Activated CD8-positive, alpha-beta T cell treated with anti-CD3 and anti-CD28 coated beads, Interleukin-2, amount 10 ng/mL, durations not matched to agents 7 days and 5 days (primary cell): ENCODE measurements at regions of chr7 and their contacts with region 1.

Region 1: DNA sequence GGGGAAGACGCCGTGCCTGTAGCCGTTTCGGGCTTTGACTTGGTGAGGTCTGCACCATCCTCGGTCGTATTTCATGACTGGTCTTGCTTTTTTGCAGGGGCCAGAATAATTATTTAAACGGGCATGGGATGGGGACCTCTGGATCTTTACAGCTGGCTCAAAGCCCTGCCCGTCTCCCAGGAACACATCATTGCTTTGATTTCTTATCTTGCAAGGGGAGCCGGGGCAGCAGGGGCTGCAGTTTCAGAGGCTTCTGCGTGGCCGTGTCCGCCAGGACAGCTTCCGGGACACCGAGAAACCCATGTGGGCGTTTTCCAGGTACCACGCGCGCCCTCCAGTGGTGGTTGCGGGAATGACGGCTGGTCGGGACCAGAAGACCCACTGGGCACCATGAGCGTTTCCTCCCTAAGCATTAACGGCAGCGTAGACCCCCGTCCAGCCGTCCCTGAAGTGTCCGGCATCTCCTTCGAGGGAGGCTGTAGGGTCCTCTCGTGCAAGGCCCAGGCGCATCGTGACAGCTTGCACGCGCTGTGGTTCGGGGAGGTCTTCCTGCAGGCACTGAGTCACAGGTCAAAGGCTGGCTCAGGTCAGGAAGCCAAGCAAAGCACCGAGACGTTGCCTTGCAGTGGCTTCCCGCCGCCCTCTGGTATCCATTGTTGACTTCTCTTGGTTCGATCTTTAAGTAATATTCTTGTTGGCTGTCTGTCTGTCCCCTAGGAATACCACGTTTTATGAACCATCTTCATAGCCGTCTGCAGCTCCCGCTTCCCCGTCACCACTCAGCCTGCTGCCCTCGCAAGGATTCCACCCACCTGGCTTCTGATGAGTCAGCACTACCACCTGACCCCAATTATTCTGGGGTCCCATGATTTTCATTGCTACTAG is 16.2 kb upstream of the ZFAND2A start:
- DNase-seq: peak; percentile 87
- ATAC-seq: peak; percentile 73
- H3K4me3 Mint-ChIP-seq: peak overlapping the region; percentile 22
- H3K27ac Mint-ChIP-seq: peak overlapping the region; percentile 86
- H3K4me1 Mint-ChIP-seq: peaks cover 20% of the 10 kb centered on the region
- H3K27me3 Mint-ChIP-seq: peaks cover 11% of the 10 kb centered on the region

Region 2: GRCh38 chr7:923108-924041 is 252.8 kb before region 1 on chr7:
- CTCF ChIA-PET with region 1: no interaction called
- POLR2A ChIA-PET with region 1: no interaction called
- DNase-seq: peak; percentile 97
- ATAC-seq: peak; percentile 83
- H3K4me3 Mint-ChIP-seq: peak overlapping the region; percentile 83
- H3K27ac Mint-ChIP-seq: peak overlapping the region; percentile 96
- H3K4me1 Mint-ChIP-seq: peaks cover 47% of the 10 kb centered on the region
- H3K27me3 Mint-ChIP-seq: no peaks in the 10 kb centered on the region

Region 3: DNA sequence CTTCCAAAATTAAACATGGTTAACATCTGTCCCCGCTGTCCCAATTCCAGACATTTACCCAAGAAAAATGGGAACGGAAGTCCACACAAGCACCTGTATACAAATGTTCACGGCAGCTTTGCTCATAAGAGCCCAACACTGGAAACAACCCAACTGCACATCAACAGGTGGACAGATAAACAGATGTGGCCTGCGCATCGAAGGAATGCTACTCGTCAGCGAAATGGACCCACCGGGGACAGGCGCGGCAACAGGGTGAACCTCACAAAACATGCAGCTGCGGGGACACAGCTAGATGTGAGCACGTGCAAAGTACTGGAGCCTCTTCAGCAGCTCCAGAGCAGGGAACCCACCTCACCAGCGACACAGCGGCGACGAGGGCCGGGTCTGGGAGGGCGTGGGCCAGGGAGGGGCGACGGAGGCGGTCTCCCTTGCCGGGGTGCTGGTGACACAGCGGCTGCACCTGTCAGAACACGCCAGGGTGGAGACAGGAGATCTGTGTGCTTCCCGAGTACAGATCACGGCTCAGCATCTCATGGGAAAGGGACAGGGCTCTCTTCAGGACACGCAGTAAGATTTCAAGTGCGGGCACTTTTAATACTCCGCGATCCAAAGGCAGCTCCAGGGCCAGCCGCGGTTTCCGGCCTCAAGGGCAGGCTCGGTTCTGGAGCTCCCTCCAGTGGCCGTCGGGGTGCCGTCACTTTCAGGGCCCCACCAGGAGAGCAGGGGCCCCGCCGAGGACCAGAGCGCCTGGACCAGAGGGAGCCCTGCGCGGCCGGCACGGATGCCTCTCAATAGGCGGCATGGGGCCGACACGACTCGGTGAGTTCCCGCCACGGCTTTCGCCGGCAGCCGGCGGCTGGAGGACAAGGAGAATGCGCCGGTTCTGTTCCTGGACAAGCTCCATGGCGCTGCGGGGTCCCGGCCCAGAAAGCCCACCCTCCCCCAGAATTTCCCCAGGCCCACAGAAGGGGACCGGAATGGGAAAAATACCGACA is 110.6 kb before region 1 on chr7:
- CTCF ChIA-PET with region 1: interaction called, 20 read pairs
- POLR2A ChIA-PET with region 1: no interaction called
- DNase-seq: peak; percentile 88
- ATAC-seq: peak; percentile 98
- H3K4me3 Mint-ChIP-seq: peak overlapping the region; percentile 31
- H3K27ac Mint-ChIP-seq: no peak overlapping the region
- H3K4me1 Mint-ChIP-seq: peaks cover 6% of the 10 kb centered on the region
- H3K27me3 Mint-ChIP-seq: no peaks in the 10 kb centered on the region

Region 4: GRCh38 chr7:1137510-1138167 is 38.6 kb before region 1 on chr7:
- CTCF ChIA-PET with region 1: interaction called, 29 read pairs
- POLR2A ChIA-PET with region 1: no interaction called
- DNase-seq: peak; percentile 38
- ATAC-seq: peak; percentile 78
- H3K4me3 Mint-ChIP-seq: peak overlapping the region; percentile 80
- H3K27ac Mint-ChIP-seq: peak overlapping the region; percentile 92
- H3K4me1 Mint-ChIP-seq: peaks cover 21% of the 10 kb centered on the region
- H3K27me3 Mint-ChIP-seq: no peaks in the 10 kb centered on the region

Region 5: DNA sequence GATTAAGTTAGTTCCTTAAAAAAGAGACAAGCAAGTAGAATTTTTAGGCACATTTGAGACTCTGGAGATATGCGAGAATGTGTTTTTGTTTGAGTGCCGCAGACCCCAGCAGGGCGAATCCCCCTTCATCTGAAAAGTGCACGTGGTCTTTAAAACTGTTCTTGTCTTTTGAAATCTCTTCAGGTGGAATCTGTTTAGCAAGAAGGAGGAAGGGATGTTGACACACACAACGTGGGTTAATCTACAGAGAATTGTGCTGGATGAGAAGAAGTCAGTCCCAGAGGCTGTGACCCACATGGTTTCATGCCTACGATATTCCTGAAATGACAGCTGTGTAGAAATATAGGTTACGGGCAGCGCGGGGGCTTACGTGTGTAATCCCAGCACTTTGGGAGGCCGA is 10.9 kb after region 1 on chr7:
- CTCF ChIA-PET with region 1: interaction called, 68 read pairs
- POLR2A ChIA-PET with region 1: no interaction called
- DNase-seq: no peak
- ATAC-seq: no peak
- H3K4me3 Mint-ChIP-seq: no peak overlapping the region
- H3K27ac Mint-ChIP-seq: no peak overlapping the region
- H3K4me1 Mint-ChIP-seq: peaks cover 21% of the 10 kb centered on the region
- H3K27me3 Mint-ChIP-seq: peaks cover 13% of the 10 kb centered on the region

Region 6: DNA sequence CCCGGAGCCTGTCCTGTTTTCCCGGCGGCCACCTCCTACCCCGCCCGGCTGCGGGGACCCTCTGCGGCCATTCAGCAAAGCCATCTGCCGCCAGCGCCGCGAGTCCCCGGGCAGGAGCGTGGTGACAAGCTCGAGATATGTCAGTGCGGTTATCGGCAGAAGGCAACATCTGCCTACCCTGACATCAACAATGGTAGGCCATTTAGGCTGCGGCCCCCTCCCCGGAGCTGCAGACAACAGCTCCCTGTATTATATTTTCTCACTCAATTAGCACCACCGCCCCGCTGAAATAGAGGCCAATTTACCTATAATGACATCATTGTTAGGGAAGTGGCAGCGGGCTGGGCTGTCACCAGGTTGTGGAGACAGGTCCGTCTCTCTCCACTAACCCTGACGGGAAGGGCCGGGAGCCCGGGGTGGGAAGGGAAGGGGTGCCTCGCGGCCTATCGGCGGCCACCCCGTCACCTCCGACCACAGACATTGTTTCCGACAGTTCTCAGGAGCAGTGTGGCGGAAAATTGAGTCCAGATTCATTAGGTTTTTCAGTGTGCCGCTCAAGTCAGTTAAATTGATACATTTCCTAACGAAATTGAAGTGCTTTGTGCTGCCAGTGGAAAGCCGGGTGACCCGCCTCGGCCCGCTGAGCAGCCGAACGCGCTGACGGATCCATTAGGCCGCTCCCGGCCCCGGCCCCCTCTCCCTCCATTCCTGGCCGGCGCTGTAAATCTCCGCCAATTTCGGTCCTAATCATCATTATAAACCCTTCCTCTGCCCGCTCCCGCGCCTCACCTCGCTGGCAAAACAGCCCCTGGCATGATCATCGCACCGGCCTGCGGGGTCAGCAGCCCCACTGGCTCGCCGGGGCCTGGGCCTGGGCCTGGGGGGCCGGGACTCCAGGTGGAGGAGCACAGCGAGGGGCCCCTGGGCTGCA is 99.5 kb after region 1 on chr7:
- CTCF ChIA-PET with region 1: no interaction called
- POLR2A ChIA-PET with region 1: no interaction called
- DNase-seq: no peak
- ATAC-seq: no peak
- H3K4me3 Mint-ChIP-seq: no peak overlapping the region
- H3K27ac Mint-ChIP-seq: no peak overlapping the region
- H3K4me1 Mint-ChIP-seq: no peaks in the 10 kb centered on the region
- H3K27me3 Mint-ChIP-seq: no peaks in the 10 kb centered on the region